Transverse colon (tissue), 4 donors: ENCODE measurements at regions of chr9 and their contacts with region 1.

Region 1: DNA sequence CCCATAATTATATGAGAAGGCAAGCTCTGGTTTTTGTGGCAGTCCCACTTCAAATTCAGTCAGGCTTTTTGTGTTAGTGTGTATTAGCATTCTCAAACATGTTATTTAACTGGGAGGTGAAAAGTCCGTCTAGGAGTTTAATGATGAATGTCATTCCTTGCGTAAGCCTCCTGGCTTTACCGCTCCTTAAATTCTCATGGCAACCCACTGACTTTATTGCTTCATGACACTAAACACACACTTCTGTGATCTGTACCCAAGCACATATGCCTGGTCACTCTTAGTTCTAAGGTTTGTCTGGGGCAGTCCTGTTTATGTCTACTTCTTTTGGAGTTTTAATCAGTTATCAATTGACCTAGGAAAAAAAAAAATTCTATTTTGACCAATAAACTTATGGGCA is 677.9 kb upstream of the DMAC1 start:
- DNase-seq: no peak
- H3K4me3 ChIP-seq: no peak overlapping the region
- H3K27ac ChIP-seq: no peak overlapping the region
- H3K4me1 ChIP-seq: no peaks in the 10 kb centered on the region
- H3K27me3 ChIP-seq: no peaks in the 10 kb centered on the region
- CTCF ChIP-seq: no peak
- EP300 ChIP-seq: no peak
- POLR2A ChIP-seq: no peak

Region 2: GRCh38 chr9:9730174-9730573 is 1252.7 kb after region 1 on chr9:
- in situ Hi-C with region 1: no loop called
- intact Hi-C with region 1: loop called (anchors 5 kb)
- DNase-seq: no peak
- H3K4me3 ChIP-seq: no peak overlapping the region
- H3K27ac ChIP-seq: no peak overlapping the region
- H3K4me1 ChIP-seq: no peaks in the 10 kb centered on the region
- H3K27me3 ChIP-seq: no peaks in the 10 kb centered on the region
- CTCF ChIP-seq: no peak
- EP300 ChIP-seq: no peak
- POLR2A ChIP-seq: no peak